ENCODE measurements at regions of chr12 and their contacts with region 1.

Region 1: DNA sequence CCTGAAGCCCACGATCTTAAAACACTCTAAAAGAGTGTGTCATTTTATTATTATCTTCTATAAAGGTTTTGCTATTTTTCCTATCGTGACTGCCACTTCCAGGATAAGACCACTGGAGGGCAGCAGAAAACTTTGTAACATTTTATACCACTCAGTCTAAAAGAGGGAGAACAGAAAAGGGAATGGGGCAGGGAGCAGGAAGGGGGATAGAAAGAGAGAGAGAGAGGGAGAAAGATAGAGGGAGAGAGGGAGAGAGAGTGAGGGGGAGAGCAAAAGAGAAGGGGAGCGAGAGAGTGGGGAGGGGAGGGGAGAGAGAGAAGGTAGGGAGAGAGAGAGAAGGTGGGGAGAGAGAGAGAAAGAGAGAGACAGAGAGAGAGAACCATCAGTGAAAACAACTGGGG is 2.0 kb upstream of the ART4 start:
- DNase-seq: peak; percentile 50
- H3K4me3 Mint-ChIP-seq: no peak overlapping the region
- H3K27ac Mint-ChIP-seq: peak overlapping the region; percentile 12
- H3K4me1 Mint-ChIP-seq: peaks cover 19% of the 10 kb centered on the region
- H3K27me3 Mint-ChIP-seq: no peaks in the 10 kb centered on the region
- CTCF ChIP-seq: peak; percentile 50

Region 2: DNA sequence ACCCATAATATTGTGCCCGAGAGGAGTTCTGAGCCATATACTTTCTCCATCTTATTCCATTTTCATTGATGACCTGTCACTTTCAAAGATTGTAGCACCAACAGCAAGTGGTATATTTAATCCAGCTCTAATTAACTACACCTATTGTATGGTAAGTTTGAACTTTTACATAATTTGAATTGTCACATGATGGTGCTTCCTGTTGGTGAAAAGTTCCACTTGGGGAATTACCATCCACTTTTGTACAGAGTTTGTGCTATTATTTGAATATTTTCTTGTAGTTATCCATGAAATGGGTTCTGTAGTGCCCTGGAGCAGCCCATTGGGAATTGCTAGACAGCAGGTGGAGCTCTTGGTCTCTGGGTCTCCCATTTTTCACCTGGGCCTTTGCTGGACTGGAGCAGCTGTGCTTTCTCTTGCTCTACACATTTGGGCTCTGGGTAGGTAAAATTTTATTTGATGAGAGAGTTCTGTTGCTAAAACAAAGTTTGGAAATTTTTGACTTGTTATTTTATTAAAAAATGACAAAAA is 34.3 kb before region 1 on chr12:
- CTCF ChIA-PET with region 1: no interaction called
- intact Hi-C with region 1: loop called (anchors 1 kb)
- DNase-seq: peak; percentile 57
- H3K4me3 Mint-ChIP-seq: no peak overlapping the region
- H3K27ac Mint-ChIP-seq: no peak overlapping the region
- H3K4me1 Mint-ChIP-seq: peaks cover 9% of the 10 kb centered on the region
- H3K27me3 Mint-ChIP-seq: no peaks in the 10 kb centered on the region
- CTCF ChIP-seq: peak; percentile 51

Region 3: GRCh38 chr12:14885718-14886221 is 40.4 kb after region 1 on chr12 and contains the start of gene MGP:
- CTCF ChIA-PET with region 1: no interaction called
- intact Hi-C with region 1: loop called (anchors 5 kb)
- DNase-seq: no peak
- H3K4me3 Mint-ChIP-seq: no peak within 1 kb of the TSS
- H3K27ac Mint-ChIP-seq: no peak within 1 kb of the TSS
- H3K4me1 Mint-ChIP-seq: peaks cover 38% of the 10 kb centered on the region
- H3K27me3 Mint-ChIP-seq: no peaks in the 10 kb centered on the region
- CTCF ChIP-seq: no peak
- total RNA-seq, gene MGP: 0.64 TPM in 1 of 2 replicates, not detected in the other

Region 4: DNA sequence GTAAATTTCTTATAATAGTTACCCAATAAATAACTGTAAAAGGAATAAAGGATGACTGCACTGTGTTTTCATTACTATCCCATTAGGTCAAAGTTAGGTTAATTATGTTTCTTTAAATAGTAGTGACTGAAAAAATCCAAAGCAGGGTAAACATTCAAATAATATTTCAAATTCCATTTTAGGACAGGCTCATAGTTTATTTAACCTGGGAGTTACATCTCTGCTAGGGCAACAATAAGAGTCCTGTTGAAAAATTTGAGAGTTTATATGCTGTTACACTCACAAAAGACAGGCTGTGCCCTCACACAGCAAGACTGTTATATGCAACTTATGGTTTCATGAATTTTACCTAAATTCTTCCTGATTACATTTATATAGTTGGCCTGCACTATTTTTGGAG is 84.9 kb after region 1 on chr12:
- CTCF ChIA-PET with region 1: no interaction called
- intact Hi-C with region 1: loop called (anchors 5 kb)
- DNase-seq: no peak
- H3K4me3 Mint-ChIP-seq: no peak overlapping the region
- H3K27ac Mint-ChIP-seq: no peak overlapping the region
- H3K4me1 Mint-ChIP-seq: peaks cover 64% of the 10 kb centered on the region
- H3K27me3 Mint-ChIP-seq: no peaks in the 10 kb centered on the region
- CTCF ChIP-seq: no peak